ENCODE measurements at regions of chr6 and their contacts with region 1.

Region 1: GRCh38 chr6:21438237-21438985 is 155.1 kb upstream of the SOX4 start:
- DNase-seq: peak; percentile 73
- ATAC-seq: peak; percentile 94
- H3K4me3 Mint-ChIP-seq: peak overlapping the region; percentile 39
- H3K27ac Mint-ChIP-seq: peak overlapping the region; percentile 55
- H3K4me1 Mint-ChIP-seq: peaks cover 21% of the 10 kb centered on the region
- H3K27me3 Mint-ChIP-seq: peaks cover 11% of the 10 kb centered on the region

Region 2: GRCh38 chr6:20542927-20543602 is 895.3 kb before region 1 on chr6:
- CTCF ChIA-PET with region 1: no interaction called
- POLR2A ChIA-PET with region 1: no interaction called
- intact Hi-C with region 1: loop called in 1 of 2 experiments (anchors 2 kb)
- DNase-seq: peak; percentile 53
- ATAC-seq: peak; percentile 97
- H3K4me3 Mint-ChIP-seq: peak overlapping the region; percentile 11
- H3K27ac Mint-ChIP-seq: peak overlapping the region; percentile 69
- H3K4me1 Mint-ChIP-seq: peaks cover 45% of the 10 kb centered on the region
- H3K27me3 Mint-ChIP-seq: no peaks in the 10 kb centered on the region

Region 3: DNA sequence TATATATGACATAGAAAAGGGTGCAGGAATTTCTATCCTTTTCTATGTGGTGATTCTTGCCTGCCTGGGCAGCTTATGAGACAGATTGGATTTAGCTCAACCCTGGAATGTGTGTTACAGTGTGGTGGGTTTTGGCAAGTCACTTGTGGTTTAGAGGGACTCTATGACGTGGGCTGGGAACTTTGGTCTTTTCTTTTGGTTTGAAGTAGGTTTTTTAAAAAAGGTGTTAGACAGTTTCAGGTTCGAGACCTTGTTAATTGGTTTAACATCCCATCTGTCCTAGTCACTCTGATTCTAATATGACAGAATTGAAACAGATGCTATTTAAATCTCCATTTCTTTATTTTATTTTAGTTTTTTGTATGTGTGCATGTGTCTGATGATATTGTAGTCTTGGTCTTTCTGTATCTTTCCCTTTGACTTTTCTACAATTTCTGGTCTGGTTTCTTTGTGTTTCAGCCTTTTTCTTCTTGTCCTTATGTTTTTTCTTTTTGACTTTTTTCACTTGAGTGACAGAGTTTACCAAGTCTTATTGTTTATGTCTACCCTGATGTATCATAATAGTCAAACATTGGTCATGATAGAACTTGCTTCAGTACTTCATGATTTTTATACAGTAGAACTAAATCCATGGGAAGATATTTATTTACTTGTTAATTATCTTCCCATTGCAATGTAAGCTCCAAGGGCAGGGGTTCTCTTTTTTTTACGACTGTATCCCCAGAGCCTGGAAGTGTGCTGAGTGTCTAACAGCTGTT is 729.9 kb before region 1 on chr6:
- CTCF ChIA-PET with region 1: no interaction called
- POLR2A ChIA-PET with region 1: no interaction called
- intact Hi-C with region 1: loop called in 1 of 2 experiments (anchors 5 kb)
- DNase-seq: peak; percentile 49
- ATAC-seq: peak; percentile 43
- H3K4me3 Mint-ChIP-seq: no peak overlapping the region
- H3K27ac Mint-ChIP-seq: peak overlapping the region; percentile 23
- H3K4me1 Mint-ChIP-seq: peaks cover 55% of the 10 kb centered on the region
- H3K27me3 Mint-ChIP-seq: no peaks in the 10 kb centered on the region

Region 4: GRCh38 chr6:20919677-20920385 is 518.6 kb before region 1 on chr6:
- CTCF ChIA-PET with region 1: no interaction called
- POLR2A ChIA-PET with region 1: no interaction called
- intact Hi-C with region 1: loop called in 1 of 2 experiments (anchors 1 kb)
- DNase-seq: peak; percentile 35
- ATAC-seq: peak; percentile 94
- H3K4me3 Mint-ChIP-seq: no peak overlapping the region
- H3K27ac Mint-ChIP-seq: peak overlapping the region; percentile 49
- H3K4me1 Mint-ChIP-seq: peaks cover 23% of the 10 kb centered on the region
- H3K27me3 Mint-ChIP-seq: no peaks in the 10 kb centered on the region

Region 5: DNA sequence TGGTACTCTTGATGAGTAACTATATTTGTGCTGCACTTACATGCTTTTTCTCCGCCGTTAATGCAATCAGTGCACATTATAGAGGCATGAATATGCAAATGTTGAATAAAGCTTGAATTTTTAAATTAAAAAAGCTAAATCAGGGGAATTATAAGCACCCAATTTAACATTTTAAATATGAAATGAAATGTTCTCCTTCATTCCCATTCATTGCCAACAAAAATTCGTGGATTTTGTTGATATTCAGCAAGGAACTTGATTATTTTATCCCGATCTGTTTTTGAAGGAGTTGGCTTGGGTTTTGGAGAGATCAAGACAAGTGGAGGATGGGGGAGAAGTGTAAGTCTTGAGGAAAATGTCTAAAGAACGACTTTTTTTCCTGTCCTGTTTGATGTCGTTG is 163.6 kb before region 1 on chr6:
- CTCF ChIA-PET with region 1: no interaction called
- POLR2A ChIA-PET with region 1: no interaction called
- intact Hi-C with region 1: no loop called
- DNase-seq: no peak
- ATAC-seq: no peak
- H3K4me3 Mint-ChIP-seq: no peak overlapping the region
- H3K27ac Mint-ChIP-seq: no peak overlapping the region
- H3K4me1 Mint-ChIP-seq: no peaks in the 10 kb centered on the region
- H3K27me3 Mint-ChIP-seq: no peaks in the 10 kb centered on the region

Region 6: DNA sequence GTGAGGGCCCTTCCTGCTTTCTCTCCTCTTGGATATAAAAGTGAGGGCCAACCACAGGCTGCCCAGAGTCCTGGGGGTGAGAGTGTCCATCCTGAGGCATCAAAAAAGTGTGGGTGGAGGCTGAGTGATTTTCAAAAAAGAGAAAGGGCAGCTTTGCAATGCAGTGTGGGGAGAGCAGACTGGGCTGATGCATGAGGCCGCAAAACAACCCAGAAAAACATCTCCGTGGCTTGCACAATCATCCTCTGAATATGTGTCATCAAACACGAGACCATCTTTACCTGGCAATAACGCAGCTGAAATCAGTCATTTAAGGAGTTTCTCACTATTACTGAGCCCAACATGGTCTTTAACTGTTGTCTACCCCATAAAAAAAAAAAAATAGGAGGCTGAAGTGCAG is 36.0 kb before region 1 on chr6:
- CTCF ChIA-PET with region 1: interaction called, 4 read pairs
- POLR2A ChIA-PET with region 1: no interaction called
- intact Hi-C with region 1: loop called (anchors 1 kb)
- DNase-seq: peak; percentile 70
- ATAC-seq: peak; percentile 96
- H3K4me3 Mint-ChIP-seq: no peak overlapping the region
- H3K27ac Mint-ChIP-seq: no peak overlapping the region
- H3K4me1 Mint-ChIP-seq: peaks cover 13% of the 10 kb centered on the region
- H3K27me3 Mint-ChIP-seq: peaks cover 4% of the 10 kb centered on the region